GM12878 (cell line): ENCODE measurements at regions of chr5 and their contacts with region 1.

Region 1: GRCh38 chr5:96934708-96935558 is 947 bp upstream of the LNPEP start:
- DNase-seq: peak; percentile 86
- ATAC-seq: peak; percentile 77
- H3K4me3 ChIP-seq: peak overlapping the region; percentile 94
- H3K27ac ChIP-seq: peak overlapping the region; percentile 97
- H3K4me1 ChIP-seq: peaks cover 14% of the 10 kb centered on the region
- H3K27me3 ChIP-seq: no peaks in the 10 kb centered on the region
- CTCF ChIP-seq: no peak
- EP300 ChIP-seq: peak; percentile 26 to 74; a peak in 2 of 4 replicates
- POLR2A ChIP-seq: peak; percentile 85
- RAD21 ChIP-seq: no peak

Region 2: GRCh38 chr5:96743065-96743768 is 191.7 kb before region 1 on chr5:
- CTCF ChIA-PET with region 1: no interaction called
- POLR2A ChIA-PET with region 1: no interaction called
- RAD21 ChIA-PET with region 1: no interaction called
- SMC1A ChIA-PET with region 1: no interaction called
- in situ Hi-C with region 1: no loop called
- intact Hi-C with region 1: no loop called
- DNase-seq: no peak
- ATAC-seq: no peak
- H3K4me3 ChIP-seq: no peak overlapping the region
- H3K27ac ChIP-seq: no peak overlapping the region
- H3K4me1 ChIP-seq: no peaks in the 10 kb centered on the region
- H3K27me3 ChIP-seq: no peaks in the 10 kb centered on the region
- CTCF ChIP-seq: no peak
- EP300 ChIP-seq: no peak
- POLR2A ChIP-seq: no peak
- RAD21 ChIP-seq: no peak

Region 3: GRCh38 chr5:96876292-96876850 is 58.6 kb before region 1 on chr5 and contains the start of gene ERAP2:
- CTCF ChIA-PET with region 1: interaction called, 35 read pairs
- POLR2A ChIA-PET with region 1: interaction called, 14 read pairs
- RAD21 ChIA-PET with region 1: interaction called, 67 read pairs
- SMC1A ChIA-PET with region 1: interaction called, 78 read pairs
- in situ Hi-C with region 1: no loop called
- intact Hi-C with region 1: no loop called
- DNase-seq: no peak
- ATAC-seq: peak; percentile 58
- H3K4me3 ChIP-seq: peak within 1 kb of the TSS; percentile 86
- H3K27ac ChIP-seq: peak within 1 kb of the TSS; percentile 86
- H3K4me1 ChIP-seq: peaks cover 33% of the 10 kb centered on the region
- H3K27me3 ChIP-seq: no peaks in the 10 kb centered on the region
- CTCF ChIP-seq: no peak
- EP300 ChIP-seq: peak in 1 of 2 experiments; percentile 35; a peak in 1 of 4 replicates
- POLR2A ChIP-seq: no peak
- RAD21 ChIP-seq: no peak
- polyA plus RNA-seq, gene ERAP2: 4.0 to 4.3 TPM

Region 4: GRCh38 chr5:96896806-96897205 is 38.1 kb before region 1 on chr5:
- CTCF ChIA-PET with region 1: interaction called, 23 read pairs
- POLR2A ChIA-PET with region 1: interaction called, 12 read pairs
- RAD21 ChIA-PET with region 1: interaction called, 27 read pairs
- SMC1A ChIA-PET with region 1: interaction called, 36 read pairs
- in situ Hi-C with region 1: no loop called
- intact Hi-C with region 1: loop called (anchors 2 kb)
- DNase-seq: no peak
- ATAC-seq: peak; percentile 98
- H3K4me3 ChIP-seq: 0 out of 2 replicates have a peak overlapping the region, but pooled peaks have one; percentile 15
- H3K27ac ChIP-seq: peak overlapping the region; percentile 68
- H3K4me1 ChIP-seq: peaks cover 10% of the 10 kb centered on the region; the same call in 1 of the 2 replicates
- H3K27me3 ChIP-seq: no peaks in the 10 kb centered on the region
- CTCF ChIP-seq: peak in 1 of 3 experiments; percentile 33; a peak in 2 of 6 replicates
- EP300 ChIP-seq: peak; percentile 56 to 64; a peak in 2 of 4 replicates
- POLR2A ChIP-seq: no peak
- RAD21 ChIP-seq: peak; percentile 31; the same call in 1 of the 2 replicates

Region 5: DNA sequence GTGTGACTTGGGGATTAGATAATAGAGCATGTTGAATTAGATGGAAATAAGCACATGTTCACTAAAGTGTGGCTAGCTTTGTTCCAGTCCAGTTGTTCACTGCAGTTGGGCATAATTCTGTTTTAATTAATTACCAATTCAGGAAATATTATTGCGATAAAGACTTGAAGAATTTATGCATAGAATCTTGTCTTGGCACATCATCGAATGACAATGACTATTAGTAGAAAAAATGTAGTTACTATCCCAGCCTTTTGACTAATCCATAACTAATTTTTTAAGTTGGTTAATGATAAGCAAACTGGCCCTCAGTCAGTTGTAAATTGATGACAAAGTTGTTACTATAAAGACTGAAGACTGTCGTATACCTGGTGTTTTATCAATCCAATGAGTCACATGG is 11.4 kb after region 1 on chr5:
- CTCF ChIA-PET with region 1: no interaction called
- POLR2A ChIA-PET with region 1: interaction called, 5 read pairs
- RAD21 ChIA-PET with region 1: interaction called, 3 read pairs
- SMC1A ChIA-PET with region 1: interaction called, 12 read pairs
- in situ Hi-C with region 1: no loop called
- intact Hi-C with region 1: no loop called
- DNase-seq: no peak
- ATAC-seq: no peak
- H3K4me3 ChIP-seq: no peak overlapping the region
- H3K27ac ChIP-seq: no peak overlapping the region
- H3K4me1 ChIP-seq: no peaks in the 10 kb centered on the region
- H3K27me3 ChIP-seq: no peaks in the 10 kb centered on the region
- CTCF ChIP-seq: no peak
- EP300 ChIP-seq: no peak
- POLR2A ChIP-seq: no peak
- RAD21 ChIP-seq: no peak

Region 6: DNA sequence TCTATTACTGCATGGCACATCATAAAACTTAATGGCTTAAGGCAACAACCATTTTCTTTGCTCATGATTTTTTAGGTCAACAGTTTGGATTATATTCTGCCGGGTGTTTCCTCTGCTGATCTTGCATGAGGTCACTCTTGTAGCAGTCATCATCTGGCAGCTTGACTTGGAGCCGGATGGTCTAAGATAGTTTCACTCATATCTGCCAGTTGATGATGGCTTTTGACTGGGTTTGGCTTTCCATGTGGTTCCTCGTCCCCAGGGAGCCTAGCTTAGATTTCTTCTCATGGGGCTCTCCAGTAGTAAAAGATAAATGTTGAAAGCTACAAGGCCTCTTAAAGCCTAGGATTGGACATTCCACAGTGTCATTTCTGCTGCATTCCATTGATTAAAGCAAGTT is 28.3 kb after region 1 on chr5:
- CTCF ChIA-PET with region 1: interaction called, 17 read pairs
- POLR2A ChIA-PET with region 1: interaction called, 65 read pairs
- RAD21 ChIA-PET with region 1: interaction called, 31 read pairs
- SMC1A ChIA-PET with region 1: interaction called, 65 read pairs
- in situ Hi-C with region 1: no loop called
- intact Hi-C with region 1: no loop called
- DNase-seq: peak; percentile 33
- ATAC-seq: peak; percentile 74
- H3K4me3 ChIP-seq: peak overlapping the region; percentile 52; the same call in 1 of the 2 replicates
- H3K27ac ChIP-seq: peak overlapping the region; percentile 27
- H3K4me1 ChIP-seq: peaks cover 12% of the 10 kb centered on the region
- H3K27me3 ChIP-seq: no peaks in the 10 kb centered on the region
- CTCF ChIP-seq: no peak
- EP300 ChIP-seq: no peak
- POLR2A ChIP-seq: no peak
- RAD21 ChIP-seq: no peak